ENCODE measurements at regions of chr10 and their contacts with region 1.

Region 1: DNA sequence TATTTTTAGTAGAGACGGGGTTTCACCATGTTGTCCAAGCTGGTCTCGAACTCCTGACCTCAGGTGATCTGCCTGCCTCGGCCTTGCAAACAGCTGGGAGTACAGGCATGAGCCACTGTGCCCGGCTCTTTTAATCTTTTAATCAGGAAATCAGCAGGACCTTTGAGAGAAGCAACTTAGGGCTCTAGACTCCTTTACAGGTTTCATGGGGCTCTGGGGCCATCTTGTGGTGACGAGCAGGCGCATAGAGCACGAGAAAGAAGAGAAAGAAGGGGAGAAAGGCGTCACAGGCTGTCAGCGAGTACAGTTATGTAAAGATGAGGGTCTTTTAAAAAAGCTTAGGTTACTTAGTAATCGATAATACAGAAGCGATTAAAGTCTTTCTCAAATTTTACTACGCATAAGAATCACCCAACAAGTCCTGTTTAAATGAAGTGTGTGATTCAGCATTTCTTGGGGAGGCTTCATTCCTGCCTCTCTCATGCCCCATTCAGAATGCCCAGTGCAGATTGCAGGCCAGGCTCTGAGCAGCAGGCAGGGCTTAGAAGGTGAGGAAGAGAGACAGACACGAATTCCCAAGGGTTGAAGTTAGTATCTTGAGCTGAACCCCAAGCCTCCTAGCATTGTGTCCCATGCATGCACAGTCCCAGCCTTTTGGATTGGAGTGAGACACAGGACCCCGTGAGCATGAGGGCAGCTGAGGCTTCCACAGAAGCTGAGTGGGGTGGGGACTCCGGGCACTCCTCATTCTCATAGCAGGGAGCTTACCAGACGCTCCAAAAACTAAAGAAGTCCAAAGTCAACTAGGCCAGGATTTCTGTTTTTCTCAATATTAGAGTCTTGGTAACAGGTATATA is 23.6 kb upstream of the PFKP start:
- DNase-seq: peak in 4 of 5 donors; percentile 21 to 40 (median 22)
- H3K4me3 ChIP-seq: no peak overlapping the region
- H3K4me3 Mint-ChIP-seq: peak overlapping the region in 1 of 8 donors; percentile 2
- H3K27ac ChIP-seq: no peak overlapping the region
- H3K27ac Mint-ChIP-seq: peak overlapping the region in 2 of 7 donors; percentile 41 to 53
- H3K4me1 ChIP-seq: no peaks in the 10 kb centered on the region
- H3K4me1 Mint-ChIP-seq: peaks cover 0 to 5% (median 0%) of the 10 kb centered on the region in 4 donors
- H3K27me3 ChIP-seq: peaks cover 3% of the 10 kb centered on the region
- H3K27me3 Mint-ChIP-seq: peaks cover 13 to 17% of the 10 kb centered on the region in 2 donors

Region 2: DNA sequence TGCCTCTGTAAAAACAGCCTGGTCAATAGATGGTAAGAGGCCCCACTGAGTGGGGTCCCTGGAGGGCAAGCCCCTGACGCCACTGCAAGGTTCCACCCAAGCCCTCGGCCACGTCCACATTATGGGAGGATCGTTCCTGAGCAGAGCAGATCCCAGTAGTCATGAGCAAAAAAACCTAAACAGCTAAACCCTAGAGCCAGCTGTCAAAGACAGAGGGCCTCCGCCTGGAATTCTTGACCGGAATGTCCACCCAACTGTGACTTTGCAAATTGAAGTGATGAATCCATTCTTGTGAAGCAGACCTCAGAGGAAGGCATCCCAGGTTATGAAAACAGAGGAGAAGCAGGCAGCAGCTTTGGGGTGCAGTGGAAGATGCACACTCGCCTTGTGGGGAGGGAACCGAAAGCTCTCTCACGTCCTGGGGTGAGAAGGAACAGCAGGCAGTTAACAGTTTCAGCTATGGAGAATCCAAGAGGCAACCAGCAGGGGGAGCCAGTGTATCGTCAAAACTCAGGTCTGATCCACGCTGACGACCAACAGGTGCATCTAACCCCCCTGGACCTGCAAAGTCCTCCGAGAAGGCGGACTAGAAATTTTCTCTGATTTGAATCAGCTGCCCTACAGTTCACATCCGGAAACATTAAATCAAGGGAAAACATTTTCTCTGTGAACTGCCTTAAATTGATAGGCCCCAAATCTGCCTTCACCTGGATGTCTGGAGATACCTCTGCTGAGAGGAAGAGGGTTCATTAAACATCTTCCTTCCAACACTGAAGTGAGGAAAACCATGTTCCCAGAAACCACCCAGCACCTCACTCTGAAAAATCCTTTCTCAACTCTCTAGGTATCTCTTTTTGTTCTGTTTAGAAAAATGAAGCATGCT is 115.5 kb before region 1 on chr10:
- CTCF ChIA-PET with region 1: interaction called, 6 read pairs
- POLR2A ChIA-PET with region 1: no interaction called
- intact Hi-C with region 1: loop called (anchors 1 kb)
- DNase-seq: peak in 3 of 5 donors; percentile 16 to 24 (median 19)
- H3K4me3 ChIP-seq: no peak overlapping the region
- H3K4me3 Mint-ChIP-seq: peak overlapping the region in 1 of 8 donors; percentile 3
- H3K27ac ChIP-seq: no peak overlapping the region
- H3K27ac Mint-ChIP-seq: no peak overlapping the region
- H3K4me1 ChIP-seq: no peaks in the 10 kb centered on the region
- H3K4me1 Mint-ChIP-seq: peaks cover 0 to 8% (median 7%) of the 10 kb centered on the region in 4 donors
- H3K27me3 ChIP-seq: no peaks in the 10 kb centered on the region
- H3K27me3 Mint-ChIP-seq: peaks cover 9 to 31% of the 10 kb centered on the region in 2 donors

Region 3: GRCh38 chr10:3054183-3054850 is 10.6 kb after region 1 on chr10:
- CTCF ChIA-PET with region 1: interaction called, 11 read pairs
- POLR2A ChIA-PET with region 1: no interaction called
- intact Hi-C with region 1: no loop called
- DNase-seq: no peak
- H3K4me3 ChIP-seq: no peak overlapping the region
- H3K4me3 Mint-ChIP-seq: no peak overlapping the region
- H3K27ac ChIP-seq: no peak overlapping the region
- H3K27ac Mint-ChIP-seq: no peak overlapping the region
- H3K4me1 ChIP-seq: peaks cover 8% of the 10 kb centered on the region
- H3K4me1 Mint-ChIP-seq: peaks cover 2 to 10% (median 7%) of the 10 kb centered on the region in 4 donors
- H3K27me3 ChIP-seq: peaks cover 5% of the 10 kb centered on the region
- H3K27me3 Mint-ChIP-seq: peaks cover 7 to 9% of the 10 kb centered on the region in 2 donors

Region 4: GRCh38 chr10:3270577-3271316 is 227.0 kb after region 1 on chr10:
- CTCF ChIA-PET with region 1: no interaction called
- POLR2A ChIA-PET with region 1: no interaction called
- intact Hi-C with region 1: no loop called
- DNase-seq: no peak
- H3K4me3 ChIP-seq: no peak overlapping the region
- H3K4me3 Mint-ChIP-seq: no peak overlapping the region
- H3K27ac ChIP-seq: no peak overlapping the region
- H3K27ac Mint-ChIP-seq: no peak overlapping the region
- H3K4me1 ChIP-seq: no peaks in the 10 kb centered on the region
- H3K4me1 Mint-ChIP-seq: no peaks in the 10 kb centered on the region
- H3K27me3 ChIP-seq: no peaks in the 10 kb centered on the region
- H3K27me3 Mint-ChIP-seq: peaks cover 4 to 6% of the 10 kb centered on the region in 2 donors